ENCODE measurements at regions of chr15 and their contacts with region 1.

Region 1: DNA sequence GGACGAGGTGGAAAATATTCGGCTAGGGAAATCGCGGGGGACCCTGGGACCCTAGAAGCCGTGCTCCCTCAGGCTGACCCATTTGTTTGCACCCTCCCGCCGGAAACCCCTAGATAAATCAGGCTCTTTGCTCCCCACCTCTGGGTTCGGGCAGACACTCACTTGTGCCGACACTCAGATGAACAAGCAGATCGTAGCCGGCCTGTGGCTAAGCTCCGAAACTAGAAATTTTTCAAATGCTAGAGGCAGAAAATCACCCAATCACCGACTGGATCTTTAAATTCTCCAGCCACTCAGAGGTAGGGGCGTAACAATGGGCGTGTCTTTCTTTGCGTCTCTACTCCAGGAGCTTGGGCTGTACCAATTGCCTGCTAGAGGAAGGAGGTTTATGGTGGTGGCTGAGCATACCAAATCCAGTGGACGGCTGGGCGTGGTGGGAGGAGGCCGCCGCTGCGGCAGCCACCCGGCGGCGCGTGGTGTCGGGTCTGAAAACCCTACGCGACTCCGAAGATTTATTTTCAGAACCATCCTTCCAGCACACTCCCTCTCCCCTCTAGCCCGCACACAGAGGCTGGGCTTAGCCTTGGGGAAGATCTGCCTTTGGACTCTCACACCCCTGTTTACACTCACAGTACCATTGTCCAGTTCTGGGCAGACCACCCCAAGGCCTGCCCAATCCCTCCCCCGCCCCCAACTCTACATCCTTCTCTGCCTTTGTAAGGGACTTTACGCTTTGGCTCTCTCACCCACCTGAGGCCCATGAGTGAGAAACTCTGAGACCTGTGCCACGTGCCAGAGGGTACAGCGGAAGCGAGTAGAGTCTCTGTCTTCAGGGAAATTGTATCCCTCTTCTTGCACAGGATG is at the start of gene PIF1:
- DNase-seq: peak; percentile 98
- H3K4me3 Mint-ChIP-seq: peak within 1 kb of the TSS; percentile 84
- H3K27ac Mint-ChIP-seq: peak within 1 kb of the TSS; percentile 93
- H3K4me1 Mint-ChIP-seq: peaks cover 40% of the 10 kb centered on the region
- H3K27me3 Mint-ChIP-seq: no peaks in the 10 kb centered on the region
- total RNA-seq, gene PIF1: 56.8 to 66.1 TPM

Region 2: GRCh38 chr15:64836023-64836536 is 10.4 kb after region 1 on chr15:
- CTCF ChIA-PET with region 1: interaction called, 26 read pairs
- POLR2A ChIA-PET with region 1: interaction called, 7 read pairs
- DNase-seq: no peak
- H3K4me3 Mint-ChIP-seq: peak overlapping the region; percentile 48
- H3K27ac Mint-ChIP-seq: peak overlapping the region; percentile 85
- H3K4me1 Mint-ChIP-seq: peaks cover 48% of the 10 kb centered on the region
- H3K27me3 Mint-ChIP-seq: no peaks in the 10 kb centered on the region